Natural killer cell (primary cell): ENCODE measurements at regions of chr4 and their contacts with region 1.

Region 1: DNA sequence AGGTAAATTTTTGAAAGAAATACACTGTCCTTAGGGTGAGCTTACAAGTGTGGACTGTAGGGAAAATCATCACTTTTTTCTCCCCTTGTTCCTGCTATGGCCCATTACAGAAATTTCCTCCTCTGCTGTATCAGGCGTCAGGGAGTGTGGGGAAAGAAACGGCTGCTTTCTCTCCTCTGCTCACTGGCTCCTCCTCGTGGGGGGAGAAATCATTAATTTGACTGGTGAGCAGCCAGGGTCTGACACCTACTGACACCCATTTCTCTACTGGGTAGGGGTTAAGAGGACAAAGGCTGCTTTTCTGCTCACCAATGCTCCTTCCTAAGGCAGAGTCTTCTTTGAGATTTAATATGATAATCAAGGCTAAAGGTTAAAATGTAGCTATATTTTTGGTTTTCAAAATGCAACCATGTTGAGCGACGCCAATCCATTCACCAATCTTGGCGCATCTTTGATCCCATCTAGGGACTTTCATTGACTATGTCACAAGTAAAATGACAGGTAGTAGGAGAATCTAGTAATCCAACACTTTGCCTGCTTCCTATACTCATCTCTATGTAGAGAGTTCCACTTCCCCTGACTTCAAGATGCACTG is 25.1 kb downstream of the SETD7 start:
- DNase-seq: peak; percentile 46 to 77
- ATAC-seq: peak; percentile 53 to 66 (median 63)
- H3K4me3 ChIP-seq: no peak overlapping the region
- H3K4me3 Mint-ChIP-seq: no peak overlapping the region
- H3K27ac ChIP-seq: no peak overlapping the region
- H3K27ac Mint-ChIP-seq: no peak overlapping the region
- H3K4me1 ChIP-seq: peaks cover 13% of the 10 kb centered on the region
- H3K4me1 Mint-ChIP-seq: peaks cover 23 to 42% of the 10 kb centered on the region in 2 donors
- H3K27me3 ChIP-seq: no peaks in the 10 kb centered on the region
- H3K27me3 Mint-ChIP-seq: peaks cover 0 to 3% of the 10 kb centered on the region in 2 donors
- CTCF ChIP-seq: peak; percentile 82

Region 2: GRCh38 chr4:139030614-139031235 is 500.2 kb before region 1 on chr4:
- intact Hi-C with region 1: loop called (anchors 5 kb)
- DNase-seq: peak; percentile 60 to 92
- ATAC-seq: peak; percentile 70 to 94 (median 82)
- H3K4me3 ChIP-seq: no peak overlapping the region
- H3K4me3 Mint-ChIP-seq: no peak overlapping the region
- H3K27ac ChIP-seq: no peak overlapping the region
- H3K27ac Mint-ChIP-seq: peak overlapping the region; percentile 39 to 73
- H3K4me1 ChIP-seq: peaks cover 5% of the 10 kb centered on the region
- H3K4me1 Mint-ChIP-seq: peaks cover 17 to 25% of the 10 kb centered on the region in 2 donors
- H3K27me3 ChIP-seq: no peaks in the 10 kb centered on the region
- H3K27me3 Mint-ChIP-seq: no peaks in the 10 kb centered on the region
- CTCF ChIP-seq: peak; percentile 84

Region 3: DNA sequence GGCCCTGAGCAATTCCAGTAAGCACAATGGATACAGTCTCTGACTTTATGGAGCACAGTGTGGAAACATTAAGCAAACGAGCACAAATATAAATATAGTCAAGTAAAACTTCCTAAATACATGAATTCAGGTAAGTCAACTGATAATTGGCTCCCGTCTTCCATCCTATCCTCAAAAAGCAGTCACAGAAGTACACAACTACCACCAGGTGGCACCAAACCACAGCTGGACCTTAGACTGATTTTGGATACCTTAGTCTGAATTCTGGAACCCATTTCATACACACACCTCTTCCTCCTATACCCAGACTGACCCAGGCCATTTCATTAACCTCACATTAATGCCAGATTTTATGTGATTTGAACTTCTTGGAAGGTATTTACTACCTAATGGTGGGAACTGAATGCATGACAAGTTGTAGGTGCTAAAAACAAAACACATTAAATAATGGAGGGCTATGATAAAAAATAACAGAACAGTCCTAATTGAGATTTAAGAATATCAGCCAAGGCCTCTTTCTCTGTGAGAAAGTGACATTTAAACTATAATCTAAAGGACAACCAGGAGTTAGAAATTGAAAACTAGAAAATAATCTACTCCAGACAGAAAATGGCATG is 431.5 kb before region 1 on chr4:
- intact Hi-C with region 1: loop called (anchors 1 kb)
- DNase-seq: peak; percentile 45 to 92
- ATAC-seq: peak; percentile 80 to 86 (median 86)
- H3K4me3 ChIP-seq: no peak overlapping the region
- H3K4me3 Mint-ChIP-seq: no peak overlapping the region
- H3K27ac ChIP-seq: no peak overlapping the region
- H3K27ac Mint-ChIP-seq: no peak overlapping the region
- H3K4me1 ChIP-seq: no peaks in the 10 kb centered on the region
- H3K4me1 Mint-ChIP-seq: peaks cover 0 to 9% of the 10 kb centered on the region in 2 donors
- H3K27me3 ChIP-seq: no peaks in the 10 kb centered on the region
- H3K27me3 Mint-ChIP-seq: no peaks in the 10 kb centered on the region
- CTCF ChIP-seq: peak; percentile 83

Region 4: GRCh38 chr4:139416073-139416673 is 114.8 kb before region 1 on chr4:
- intact Hi-C with region 1: loop called (anchors 1 kb)
- DNase-seq: peak in 1 of 2 donors; percentile 80
- ATAC-seq: peak in 2 of 3 donors; percentile 49 to 57
- H3K4me3 ChIP-seq: no peak overlapping the region
- H3K4me3 Mint-ChIP-seq: no peak overlapping the region
- H3K27ac ChIP-seq: no peak overlapping the region
- H3K27ac Mint-ChIP-seq: no peak overlapping the region
- H3K4me1 ChIP-seq: peaks cover 8% of the 10 kb centered on the region
- H3K4me1 Mint-ChIP-seq: peaks cover 6 to 13% of the 10 kb centered on the region in 2 donors
- H3K27me3 ChIP-seq: no peaks in the 10 kb centered on the region
- H3K27me3 Mint-ChIP-seq: no peaks in the 10 kb centered on the region
- CTCF ChIP-seq: peak; percentile 90

Region 5: GRCh38 chr4:139453371-139454110 is 77.4 kb before region 1 on chr4:
- intact Hi-C with region 1: loop called (anchors 2 kb)
- DNase-seq: peak; percentile 91 to 97
- ATAC-seq: peak; percentile 89 to 96 (median 91)
- H3K4me3 ChIP-seq: peak overlapping the region; percentile 80
- H3K4me3 Mint-ChIP-seq: peak overlapping the region; percentile 99
- H3K27ac ChIP-seq: peak overlapping the region; percentile 89
- H3K27ac Mint-ChIP-seq: peak overlapping the region; percentile 99
- H3K4me1 ChIP-seq: peaks cover 20% of the 10 kb centered on the region
- H3K4me1 Mint-ChIP-seq: peaks cover 62% of the 10 kb centered on the region in 2 donors
- H3K27me3 ChIP-seq: no peaks in the 10 kb centered on the region
- H3K27me3 Mint-ChIP-seq: no peaks in the 10 kb centered on the region
- CTCF ChIP-seq: no peak

Region 6: DNA sequence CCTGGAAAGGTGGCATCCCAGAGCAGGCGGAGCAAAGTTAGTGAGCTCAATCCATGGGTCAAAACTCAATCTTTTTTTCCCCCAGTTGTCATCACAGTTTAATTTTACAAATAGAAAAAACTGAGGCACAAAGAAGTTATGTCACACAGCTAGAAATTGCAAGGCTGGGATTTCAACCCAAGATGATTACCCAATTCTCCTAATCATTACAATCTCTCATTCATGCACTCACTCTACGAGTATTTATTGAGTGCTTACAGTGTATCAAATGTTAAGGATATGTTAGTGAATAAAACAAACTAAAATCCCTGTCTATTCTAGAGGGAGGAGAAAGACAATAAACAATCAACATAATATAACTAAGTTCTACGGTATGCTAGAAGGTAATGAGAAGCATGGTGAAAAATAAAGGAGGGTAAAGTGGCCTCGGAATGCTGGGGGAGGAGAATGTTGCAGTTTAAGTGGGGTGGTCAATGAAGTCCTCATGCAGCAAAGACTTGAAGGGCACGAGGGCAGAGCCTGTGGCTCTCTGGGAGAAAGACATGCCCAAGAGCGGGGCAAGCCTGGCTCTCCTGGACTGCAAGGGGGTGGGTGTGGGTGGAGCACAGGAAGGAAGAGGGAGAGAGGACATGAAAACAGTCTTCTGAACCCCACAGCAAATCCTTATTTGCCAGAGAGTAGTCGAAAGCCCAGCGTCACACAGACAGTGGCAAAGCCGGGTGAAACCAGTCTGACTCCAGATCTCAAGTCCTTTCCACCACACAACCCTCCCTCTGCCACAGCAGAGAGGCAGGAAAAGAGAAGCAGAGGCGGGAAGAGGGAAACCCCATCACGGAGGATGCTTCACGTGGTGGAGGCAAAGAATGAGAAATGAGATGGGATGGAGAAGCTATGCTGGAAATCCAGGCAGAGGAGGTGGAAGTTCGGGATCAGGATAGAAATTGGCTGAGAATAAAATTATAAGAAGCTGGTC is 28.7 kb before region 1 on chr4:
- intact Hi-C with region 1: loop called (anchors 2 kb)
- DNase-seq: no peak
- ATAC-seq: no peak
- H3K4me3 ChIP-seq: no peak overlapping the region
- H3K4me3 Mint-ChIP-seq: no peak overlapping the region
- H3K27ac ChIP-seq: no peak overlapping the region
- H3K27ac Mint-ChIP-seq: no peak overlapping the region
- H3K4me1 ChIP-seq: peaks cover 5% of the 10 kb centered on the region
- H3K4me1 Mint-ChIP-seq: peaks cover 9 to 10% of the 10 kb centered on the region in 2 donors
- H3K27me3 ChIP-seq: no peaks in the 10 kb centered on the region
- H3K27me3 Mint-ChIP-seq: peaks cover 13 to 14% of the 10 kb centered on the region in 2 donors
- CTCF ChIP-seq: no peak

Region 7: DNA sequence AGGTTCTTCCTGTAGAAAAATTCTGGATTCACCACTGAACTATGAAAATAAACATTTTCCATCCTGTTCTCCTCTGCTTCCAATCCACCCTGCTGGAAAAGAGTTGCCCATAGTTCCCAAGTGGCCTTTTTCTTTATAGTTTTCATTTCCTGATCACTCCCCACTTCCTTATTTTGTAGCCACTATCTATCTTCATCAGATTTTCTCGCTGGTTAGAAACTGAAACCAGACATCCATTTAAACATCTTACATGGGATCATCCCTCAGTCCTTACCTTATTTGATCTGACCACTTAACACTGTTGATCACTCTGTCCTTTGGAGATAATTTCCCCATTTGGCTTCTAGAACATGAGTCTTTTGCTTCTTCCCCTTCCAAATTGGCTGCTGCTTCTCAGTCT is 800.3 kb after region 1 on chr4:
- intact Hi-C with region 1: no loop called
- DNase-seq: no peak
- ATAC-seq: no peak
- H3K4me3 ChIP-seq: no peak overlapping the region
- H3K4me3 Mint-ChIP-seq: no peak overlapping the region
- H3K27ac ChIP-seq: no peak overlapping the region
- H3K27ac Mint-ChIP-seq: no peak overlapping the region
- H3K4me1 ChIP-seq: no peaks in the 10 kb centered on the region
- H3K4me1 Mint-ChIP-seq: peaks cover 0 to 5% of the 10 kb centered on the region in 2 donors
- H3K27me3 ChIP-seq: no peaks in the 10 kb centered on the region
- H3K27me3 Mint-ChIP-seq: peaks cover 8 to 18% of the 10 kb centered on the region in 2 donors
- CTCF ChIP-seq: no peak